ENCODE measurements at regions of chr2 and their contacts with region 1.

Region 1: GRCh38 chr2:101644842-101645383 is 52.6 kb upstream of the MAP4K4 start:
- DNase-seq: no peak
- H3K4me3 Mint-ChIP-seq: no peak overlapping the region
- H3K27ac Mint-ChIP-seq: no peak overlapping the region
- H3K4me1 Mint-ChIP-seq: no peaks in the 10 kb centered on the region
- H3K27me3 Mint-ChIP-seq: no peaks in the 10 kb centered on the region

Region 2: DNA sequence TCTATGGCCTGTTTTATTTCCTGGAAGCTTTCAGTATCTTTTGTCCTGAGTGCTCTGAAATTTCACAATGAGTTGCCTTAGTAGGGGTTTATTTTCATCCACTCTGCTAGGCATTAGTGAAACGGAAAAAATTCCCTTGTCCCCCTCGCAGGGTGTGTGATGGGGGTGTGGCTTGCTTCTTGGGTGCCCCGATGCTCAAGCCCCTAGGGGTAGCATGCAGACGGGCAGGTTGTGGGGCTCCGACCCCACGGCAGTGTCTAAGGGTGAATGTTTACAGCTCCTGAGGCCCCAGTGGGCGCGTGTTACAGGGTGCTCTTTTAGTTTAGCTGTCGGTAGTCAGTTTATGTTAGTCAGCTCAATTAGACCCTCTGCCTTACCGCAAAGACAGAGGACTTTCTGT is 20.4 kb after region 1 on chr2:
- CTCF ChIA-PET with region 1: no interaction called
- POLR2A ChIA-PET with region 1: interaction called, 10 read pairs
- DNase-seq: no peak
- H3K4me3 Mint-ChIP-seq: no peak overlapping the region
- H3K27ac Mint-ChIP-seq: no peak overlapping the region
- H3K4me1 Mint-ChIP-seq: no peaks in the 10 kb centered on the region
- H3K27me3 Mint-ChIP-seq: no peaks in the 10 kb centered on the region

Region 3: GRCh38 chr2:102187496-102188150 is 542.7 kb after region 1 on chr2:
- CTCF ChIA-PET with region 1: no interaction called
- POLR2A ChIA-PET with region 1: no interaction called
- DNase-seq: peak; percentile 24
- H3K4me3 Mint-ChIP-seq: peak overlapping the region; percentile 66
- H3K27ac Mint-ChIP-seq: no peak overlapping the region
- H3K4me1 Mint-ChIP-seq: peaks cover 18% of the 10 kb centered on the region
- H3K27me3 Mint-ChIP-seq: peaks cover 17% of the 10 kb centered on the region